A673 (cell line): ENCODE measurements at regions of chr1 and their contacts with region 1.

Region 1: GRCh38 chr1:67685067-67685557 is at the start of gene GADD45A:
- DNase-seq: peak; percentile 100
- H3K4me3 ChIP-seq: peak within 1 kb of the TSS; percentile 82
- H3K27ac ChIP-seq: peak within 1 kb of the TSS; percentile 98
- H3K4me1 ChIP-seq: peaks cover 29% of the 10 kb centered on the region
- H3K27me3 ChIP-seq: no peaks in the 10 kb centered on the region
- CTCF ChIP-seq: no peak
- total RNA-seq, gene GADD45A: 34.7 and 39.7 TPM in 2 replicates

Region 2: DNA sequence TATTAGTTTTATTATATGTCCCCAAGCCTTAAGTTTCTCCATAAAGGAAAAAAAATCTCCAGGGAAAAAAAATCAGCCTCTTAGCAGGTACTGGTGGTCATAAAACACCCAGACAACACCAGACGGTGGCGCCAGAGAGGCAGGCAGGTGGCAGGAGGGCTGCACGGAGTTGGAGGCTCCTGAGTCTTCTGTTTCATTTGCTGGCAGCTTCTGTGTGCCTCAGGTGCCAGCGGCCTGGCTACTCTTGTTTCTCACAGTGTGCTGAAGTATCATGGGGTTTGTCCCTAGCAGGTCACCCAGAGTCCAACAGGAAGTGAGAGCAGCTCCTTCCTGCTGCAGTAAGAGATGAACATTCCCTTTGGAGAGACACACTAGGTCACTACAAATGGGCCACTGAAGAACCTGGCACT is 123.4 kb before region 1 on chr1:
- CTCF ChIA-PET with region 1: no interaction called
- POLR2A ChIA-PET with region 1: no interaction called
- intact Hi-C with region 1: loop called (anchors 2 kb)
- DNase-seq: peak; percentile 84
- H3K4me3 ChIP-seq: no peak overlapping the region
- H3K27ac ChIP-seq: no peak overlapping the region
- H3K4me1 ChIP-seq: peaks cover 5% of the 10 kb centered on the region
- H3K27me3 ChIP-seq: no peaks in the 10 kb centered on the region
- CTCF ChIP-seq: peak; percentile 94

Region 3: DNA sequence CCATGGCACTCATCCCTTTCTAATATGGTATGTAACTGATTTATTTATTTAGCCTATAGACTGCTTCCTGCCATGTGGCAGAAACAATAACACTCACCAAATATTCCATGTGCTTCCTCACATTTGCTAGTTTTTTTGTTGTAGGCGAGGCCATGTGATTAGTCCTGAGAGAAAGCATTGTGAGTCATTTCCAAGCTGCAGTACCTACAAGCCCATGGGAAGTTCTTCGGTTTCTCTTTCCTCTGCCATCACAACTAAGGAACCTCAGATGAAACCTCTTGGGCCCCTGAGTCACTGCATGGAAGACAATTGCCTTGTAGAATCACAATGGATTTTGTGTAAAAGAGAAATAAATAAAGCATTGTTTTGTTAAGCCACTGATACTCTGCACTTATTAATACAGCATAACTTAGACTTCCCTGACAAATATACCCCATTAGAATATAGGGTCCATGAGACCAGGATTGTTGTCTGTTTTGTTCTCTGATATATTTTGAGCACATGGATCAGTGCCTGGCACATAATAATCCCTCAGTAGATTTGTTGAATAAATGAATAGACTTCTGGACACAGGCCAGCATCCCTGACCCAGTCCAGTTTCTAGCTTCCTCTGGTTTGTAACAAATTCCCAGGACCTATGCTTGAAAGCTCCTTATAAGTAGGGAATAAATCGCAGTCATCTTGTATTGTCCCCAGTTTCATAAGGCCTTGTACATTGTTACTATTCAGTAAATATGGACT is 58.4 kb before region 1 on chr1:
- CTCF ChIA-PET with region 1: no interaction called
- POLR2A ChIA-PET with region 1: no interaction called
- intact Hi-C with region 1: no loop called
- DNase-seq: no peak
- H3K4me3 ChIP-seq: no peak overlapping the region
- H3K27ac ChIP-seq: no peak overlapping the region
- H3K4me1 ChIP-seq: peaks cover 4% of the 10 kb centered on the region
- H3K27me3 ChIP-seq: no peaks in the 10 kb centered on the region
- CTCF ChIP-seq: no peak

Region 4: GRCh38 chr1:67735806-67736627 is 50.9 kb after region 1 on chr1:
- CTCF ChIA-PET with region 1: no interaction called
- POLR2A ChIA-PET with region 1: interaction called, 4 read pairs
- intact Hi-C with region 1: loop called (anchors 2 kb)
- DNase-seq: peak; percentile 98
- H3K4me3 ChIP-seq: peak overlapping the region; percentile 8
- H3K27ac ChIP-seq: peak overlapping the region; percentile 74
- H3K4me1 ChIP-seq: peaks cover 67% of the 10 kb centered on the region
- H3K27me3 ChIP-seq: no peaks in the 10 kb centered on the region
- CTCF ChIP-seq: no peak

Region 5: DNA sequence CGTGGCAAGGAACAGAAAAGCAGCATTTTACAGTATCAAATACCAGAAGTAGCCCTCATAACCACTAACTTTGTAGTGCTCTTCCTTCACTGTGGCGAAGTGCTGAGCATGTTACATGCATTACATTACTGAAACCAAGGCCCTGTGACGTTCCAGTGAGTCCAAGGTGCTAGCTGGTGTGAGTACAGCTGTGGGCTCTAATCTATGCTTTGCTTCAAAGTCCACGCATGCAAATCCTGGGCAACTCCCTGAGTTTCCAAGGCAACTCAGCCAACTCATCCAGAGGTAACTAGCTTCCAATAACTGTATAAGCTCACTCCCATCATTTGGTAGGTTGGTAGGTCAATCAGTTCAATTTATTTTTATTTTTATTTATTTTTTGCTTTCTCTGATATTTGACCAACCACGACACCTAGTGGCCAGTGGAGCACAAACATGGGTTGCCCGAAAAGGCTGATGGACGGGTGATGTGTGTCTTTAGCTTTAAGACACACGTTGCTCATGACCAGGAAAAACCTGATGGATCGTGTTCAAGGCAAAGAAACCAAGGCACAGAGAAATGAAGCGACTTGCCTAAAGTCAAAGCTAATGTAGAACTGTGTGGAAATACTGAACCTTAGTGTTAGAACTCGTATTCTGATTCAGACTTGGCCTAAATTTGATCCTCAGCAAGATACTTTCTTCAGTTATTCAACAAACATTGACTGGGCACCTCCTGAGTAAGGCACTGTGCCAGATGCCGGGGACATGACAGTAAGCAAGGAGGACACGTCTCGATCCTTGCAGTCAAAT is 75.1 kb after region 1 on chr1:
- CTCF ChIA-PET with region 1: interaction called, 14 read pairs
- POLR2A ChIA-PET with region 1: no interaction called
- intact Hi-C with region 1: loop called (anchors 2 kb)
- DNase-seq: peak; percentile 70
- H3K4me3 ChIP-seq: no peak overlapping the region
- H3K27ac ChIP-seq: no peak overlapping the region
- H3K4me1 ChIP-seq: no peaks in the 10 kb centered on the region
- H3K27me3 ChIP-seq: no peaks in the 10 kb centered on the region
- CTCF ChIP-seq: peak; percentile 92

Region 6: GRCh38 chr1:67832737-67833601 is 147.9 kb after region 1 on chr1 and contains the start of gene GNG12:
- CTCF ChIA-PET with region 1: no interaction called
- POLR2A ChIA-PET with region 1: interaction called, 3 read pairs
- intact Hi-C with region 1: loop called (anchors 10 kb)
- DNase-seq: peak; percentile 76
- H3K4me3 ChIP-seq: peak within 1 kb of the TSS; percentile 74
- H3K27ac ChIP-seq: peak within 1 kb of the TSS; percentile 89
- H3K4me1 ChIP-seq: peaks cover 67% of the 10 kb centered on the region
- H3K27me3 ChIP-seq: no peaks in the 10 kb centered on the region
- CTCF ChIP-seq: no peak
- total RNA-seq, gene GNG12: 48.1 and 54.8 TPM in 2 replicates

Region 7: DNA sequence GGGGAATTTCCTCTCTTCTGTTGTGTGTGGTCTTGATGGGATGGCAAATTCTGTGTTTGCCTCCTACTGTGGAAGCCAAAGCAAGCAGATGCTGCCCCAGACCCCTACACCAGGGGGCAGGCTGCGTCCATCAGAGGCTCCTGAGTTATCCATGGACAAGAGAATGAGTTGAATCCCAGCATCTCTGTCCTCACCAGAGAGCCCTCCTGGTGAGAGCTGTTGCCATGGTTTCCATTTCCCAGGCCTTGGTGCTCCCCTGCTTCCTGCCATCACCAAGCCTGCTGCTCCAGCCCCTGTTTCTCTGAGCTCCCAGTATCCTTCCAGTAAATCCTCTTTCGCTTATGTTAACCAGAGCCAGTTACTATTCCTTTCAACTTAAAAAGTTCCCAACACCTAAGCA is 168.6 kb after region 1 on chr1:
- CTCF ChIA-PET with region 1: no interaction called
- POLR2A ChIA-PET with region 1: no interaction called
- intact Hi-C with region 1: no loop called
- DNase-seq: peak; percentile 83
- H3K4me3 ChIP-seq: no peak overlapping the region
- H3K27ac ChIP-seq: no peak overlapping the region
- H3K4me1 ChIP-seq: no peaks in the 10 kb centered on the region
- H3K27me3 ChIP-seq: no peaks in the 10 kb centered on the region
- CTCF ChIP-seq: peak; percentile 77